ENCODE measurements at regions of chr1 and their contacts with region 1.

Region 1: DNA sequence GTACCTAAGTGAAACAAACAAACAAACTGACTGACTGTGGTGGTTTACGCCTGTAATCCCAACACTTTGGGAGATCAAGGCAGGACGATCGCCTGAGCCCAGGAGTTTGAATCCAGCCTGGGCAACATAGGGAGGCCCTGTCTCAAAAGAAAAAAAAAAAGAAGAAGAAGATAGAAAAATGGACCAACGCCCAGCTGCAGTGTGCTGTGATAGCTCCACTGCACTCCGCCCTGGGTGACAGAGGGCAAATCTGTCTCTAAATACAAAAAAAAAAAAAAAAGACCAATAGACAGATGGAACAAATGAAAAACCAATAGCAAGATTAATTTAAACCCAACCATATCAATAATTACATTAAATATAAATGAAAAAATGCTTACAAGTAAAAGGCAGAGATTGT is 13.9 kb downstream of the AKR7A3 start:
- DNase-seq: no peak
- H3K4me3 ChIP-seq: no peak overlapping the region
- H3K27ac ChIP-seq: no peak overlapping the region
- H3K4me1 ChIP-seq: peaks cover 0 to 5% (median 2%) of the 10 kb centered on the region in 4 donors
- H3K27me3 ChIP-seq: peaks cover 0 to 10% of the 10 kb centered on the region in 2 donors
- CTCF ChIP-seq: no peak

Region 2: GRCh38 chr1:19287436-19288185 is 13.0 kb after region 1 on chr1:
- intact Hi-C with region 1: loop called (anchors 1 kb)
- DNase-seq: no peak
- H3K4me3 ChIP-seq: no peak overlapping the region
- H3K27ac ChIP-seq: no peak overlapping the region
- H3K4me1 ChIP-seq: peaks cover 0 to 14% (median 5%) of the 10 kb centered on the region in 4 donors
- H3K27me3 ChIP-seq: no peaks in the 10 kb centered on the region
- CTCF ChIP-seq: no peak

Measured in tibial artery (tissue), 4 donors.